Activated B cell treated with CpG ODN at 0.5 μM for 24 hours (primary cell): ENCODE measurements at regions of chr14 and their contacts with region 1.

Region 1: GRCh38 chr14:68685419-68686204 is 107.3 kb downstream of the ZFP36L1 start:
- DNase-seq: peak; percentile 65
- ATAC-seq: peak; percentile 76
- H3K4me3 Mint-ChIP-seq: peak overlapping the region; percentile 73
- H3K27ac Mint-ChIP-seq: peak overlapping the region; percentile 97
- H3K4me1 Mint-ChIP-seq: peaks cover 87% of the 10 kb centered on the region
- H3K27me3 Mint-ChIP-seq: no peaks in the 10 kb centered on the region
- CTCF ChIP-seq: no peak

Region 2: DNA sequence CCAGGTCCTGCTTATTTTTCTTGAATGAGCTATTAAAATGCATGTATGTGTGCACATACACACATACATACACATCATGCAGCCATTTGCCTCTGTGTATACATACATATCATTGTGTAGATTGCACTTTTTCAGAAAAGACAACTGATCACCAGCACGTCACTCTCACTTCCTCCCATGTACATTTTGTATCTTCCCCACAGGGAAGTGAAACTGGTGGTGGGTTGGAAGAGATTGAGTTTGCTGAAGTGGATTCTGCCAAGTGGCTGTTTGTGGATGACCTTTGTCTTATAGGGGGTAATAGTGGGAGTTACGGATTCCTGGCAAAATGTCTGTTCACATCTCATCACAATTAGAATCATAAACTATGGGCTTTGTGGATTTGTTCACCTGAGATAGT is 417.4 kb before region 1 on chr14:
- CTCF ChIA-PET with region 1: no interaction called
- POLR2A ChIA-PET with region 1: interaction called, 42 read pairs
- intact Hi-C with region 1: no loop called
- DNase-seq: no peak
- ATAC-seq: peak; percentile 67
- H3K4me3 Mint-ChIP-seq: peak overlapping the region; percentile 63
- H3K27ac Mint-ChIP-seq: peak overlapping the region; percentile 93
- H3K4me1 Mint-ChIP-seq: peaks cover 93% of the 10 kb centered on the region
- H3K27me3 Mint-ChIP-seq: no peaks in the 10 kb centered on the region
- CTCF ChIP-seq: no peak

Region 3: GRCh38 chr14:68401855-68402254 is 283.8 kb before region 1 on chr14:
- CTCF ChIA-PET with region 1: interaction called, 5 read pairs
- POLR2A ChIA-PET with region 1: interaction called, 40 read pairs
- intact Hi-C with region 1: loop called (anchors 1 kb)
- DNase-seq: no peak
- ATAC-seq: peak; percentile 59
- H3K4me3 Mint-ChIP-seq: peak overlapping the region; percentile 72
- H3K27ac Mint-ChIP-seq: peak overlapping the region; percentile 92
- H3K4me1 Mint-ChIP-seq: peaks cover 92% of the 10 kb centered on the region
- H3K27me3 Mint-ChIP-seq: no peaks in the 10 kb centered on the region
- CTCF ChIP-seq: no peak

Region 4: GRCh38 chr14:68495101-68496039 is 190.2 kb before region 1 on chr14:
- CTCF ChIA-PET with region 1: no interaction called
- POLR2A ChIA-PET with region 1: interaction called, 39 read pairs
- intact Hi-C with region 1: loop called (anchors 1 kb)
- DNase-seq: no peak
- ATAC-seq: peak; percentile 92
- H3K4me3 Mint-ChIP-seq: peak overlapping the region; percentile 64
- H3K27ac Mint-ChIP-seq: peak overlapping the region; percentile 98
- H3K4me1 Mint-ChIP-seq: peaks cover 84% of the 10 kb centered on the region
- H3K27me3 Mint-ChIP-seq: no peaks in the 10 kb centered on the region
- CTCF ChIP-seq: no peak

Region 5: DNA sequence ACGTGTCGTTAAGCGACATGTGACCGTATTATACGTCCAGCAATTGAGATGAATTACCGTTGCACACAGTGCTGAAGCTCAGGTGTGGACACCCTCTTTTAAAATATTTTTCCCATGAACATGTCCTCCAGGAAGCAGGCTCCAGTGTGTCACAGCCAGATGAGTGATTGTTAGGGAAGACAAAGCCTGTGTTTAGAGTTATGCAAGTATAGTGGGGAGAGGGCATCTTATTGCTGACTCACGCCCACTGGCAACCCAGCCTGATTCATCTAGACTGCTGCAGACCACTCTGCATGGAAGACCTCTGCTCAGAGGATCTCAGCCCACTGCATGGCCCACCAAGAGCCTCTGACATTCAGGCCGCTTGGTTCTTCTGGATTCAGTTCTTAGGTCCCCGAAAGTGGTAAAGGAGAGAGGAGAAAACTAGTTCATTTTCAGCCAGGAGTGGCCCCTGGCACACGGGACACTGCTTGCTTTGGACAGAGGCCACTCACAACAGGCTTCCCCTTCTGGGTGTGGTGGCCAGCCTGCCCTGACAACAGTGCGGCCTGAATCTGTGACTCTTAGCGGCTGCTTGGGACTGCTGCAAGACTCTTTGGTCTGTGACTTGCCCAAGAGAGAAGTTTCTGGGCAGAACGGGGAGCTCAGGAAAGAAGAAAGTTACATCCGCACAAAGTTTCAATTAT is 159.0 kb before region 1 on chr14:
- CTCF ChIA-PET with region 1: interaction called, 3 read pairs
- POLR2A ChIA-PET with region 1: interaction called, 14 read pairs
- intact Hi-C with region 1: no loop called
- DNase-seq: no peak
- ATAC-seq: no peak
- H3K4me3 Mint-ChIP-seq: no peak overlapping the region
- H3K27ac Mint-ChIP-seq: peak overlapping the region; percentile 61
- H3K4me1 Mint-ChIP-seq: peaks cover 50% of the 10 kb centered on the region
- H3K27me3 Mint-ChIP-seq: no peaks in the 10 kb centered on the region
- CTCF ChIP-seq: no peak

Region 6: DNA sequence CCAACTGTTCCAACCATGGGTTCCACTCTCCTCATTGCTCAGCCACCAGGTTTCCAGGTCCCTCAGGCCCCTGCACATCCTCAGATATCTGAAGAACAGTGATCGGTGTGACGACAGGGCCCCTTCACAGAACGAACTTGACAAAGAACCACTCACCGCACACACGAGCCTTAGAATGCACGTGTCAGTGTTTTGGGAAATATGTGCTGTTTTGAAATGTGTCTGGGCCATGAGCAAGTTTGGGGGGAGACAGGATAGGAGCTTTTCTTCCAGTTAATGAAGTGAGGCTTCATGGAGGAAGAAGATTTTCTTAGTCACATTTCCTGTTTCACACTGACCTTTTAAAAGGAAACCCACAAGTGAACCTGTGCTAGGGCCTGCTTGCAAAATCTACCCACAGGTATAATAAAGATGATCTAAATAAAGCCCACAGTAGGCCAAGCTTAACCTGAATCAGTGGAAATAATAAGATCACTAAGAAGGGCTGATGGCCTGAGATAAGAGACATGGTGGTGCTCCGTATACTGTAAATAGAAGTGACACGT is 48.7 kb after region 1 on chr14:
- CTCF ChIA-PET with region 1: interaction called, 3 read pairs
- POLR2A ChIA-PET with region 1: interaction called, 25 read pairs
- intact Hi-C with region 1: no loop called
- DNase-seq: no peak
- ATAC-seq: peak; percentile 74
- H3K4me3 Mint-ChIP-seq: peak overlapping the region; percentile 39
- H3K27ac Mint-ChIP-seq: peak overlapping the region; percentile 82
- H3K4me1 Mint-ChIP-seq: peaks cover 78% of the 10 kb centered on the region
- H3K27me3 Mint-ChIP-seq: no peaks in the 10 kb centered on the region
- CTCF ChIP-seq: no peak

Region 7: GRCh38 chr14:68807148-68807600 is 121.6 kb after region 1 on chr14:
- CTCF ChIA-PET with region 1: no interaction called
- POLR2A ChIA-PET with region 1: interaction called, 10 read pairs
- intact Hi-C with region 1: no loop called
- DNase-seq: no peak
- ATAC-seq: no peak
- H3K4me3 Mint-ChIP-seq: peak overlapping the region; percentile 71
- H3K27ac Mint-ChIP-seq: peak overlapping the region; percentile 98
- H3K4me1 Mint-ChIP-seq: peaks cover 80% of the 10 kb centered on the region
- H3K27me3 Mint-ChIP-seq: no peaks in the 10 kb centered on the region
- CTCF ChIP-seq: no peak

Region 8: DNA sequence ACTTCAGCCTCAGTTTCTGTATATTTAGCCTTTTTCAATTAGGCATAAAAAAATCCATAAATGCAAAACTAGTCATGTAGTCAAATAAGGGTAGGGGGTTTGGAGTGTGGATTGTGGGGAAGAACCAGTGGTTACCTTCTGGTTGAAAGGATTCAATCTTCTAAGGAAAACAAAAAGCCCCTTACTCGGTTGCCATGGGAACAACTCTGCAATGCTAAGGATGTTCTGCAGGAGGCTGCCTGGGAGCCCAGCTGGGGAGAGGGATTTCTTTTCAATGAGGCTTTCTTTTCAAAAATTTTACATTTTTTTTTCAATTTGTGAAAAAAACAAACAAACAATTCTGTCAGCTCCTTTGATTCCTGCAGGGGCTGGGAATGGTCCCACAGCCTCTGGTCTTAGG is 1435.9 kb after region 1 on chr14:
- CTCF ChIA-PET with region 1: no interaction called
- POLR2A ChIA-PET with region 1: no interaction called
- intact Hi-C with region 1: no loop called
- DNase-seq: no peak
- ATAC-seq: no peak
- H3K4me3 Mint-ChIP-seq: no peak overlapping the region
- H3K27ac Mint-ChIP-seq: no peak overlapping the region
- H3K4me1 Mint-ChIP-seq: peaks cover 5% of the 10 kb centered on the region
- H3K27me3 Mint-ChIP-seq: peaks cover 1% of the 10 kb centered on the region
- CTCF ChIP-seq: no peak